ENCODE measurements at regions of chr9 and their contacts with region 1.

Region 1: DNA sequence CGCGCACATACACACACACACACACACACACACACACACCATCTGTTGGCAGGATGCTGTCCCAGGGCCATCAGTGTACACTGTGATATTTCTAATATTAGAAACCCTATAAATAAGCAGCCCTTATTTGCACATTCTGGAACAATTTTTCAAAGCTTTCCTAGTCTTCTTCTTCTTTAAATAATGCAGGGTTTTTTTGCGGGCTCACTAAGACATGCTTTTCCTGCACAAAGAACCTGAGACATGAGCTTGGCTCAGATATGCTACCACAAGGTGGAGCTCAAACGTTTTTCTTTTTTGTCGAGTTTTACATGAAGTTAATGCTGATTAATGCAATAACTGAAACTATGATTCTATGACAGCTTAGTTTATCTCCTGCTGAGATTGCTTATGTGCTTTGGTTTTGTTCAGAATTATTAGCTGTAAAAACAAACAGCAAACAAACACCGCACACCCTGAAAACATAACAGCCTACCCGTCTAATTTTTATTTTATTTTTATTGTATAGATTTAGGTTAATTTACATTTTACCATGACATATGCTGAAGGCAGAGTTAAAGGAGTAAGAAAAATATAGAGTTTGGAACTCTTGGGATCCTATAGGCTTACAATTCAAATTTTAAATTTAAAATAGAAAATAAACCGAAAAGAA is 95.8 kb downstream of the ALDH1A1 start:
- DNase-seq: peak; percentile 14 to 18
- H3K4me3 ChIP-seq: no peak overlapping the region
- H3K27ac ChIP-seq: peak overlapping the region in 2 of 3 donors; percentile 25 to 52
- H3K4me1 ChIP-seq: peaks cover 14 to 16% of the 10 kb centered on the region in 2 donors
- H3K27me3 ChIP-seq: no peaks in the 10 kb centered on the region
- CTCF ChIP-seq: peak; percentile 28 to 78 (median 68)
- POLR2A ChIP-seq: no peak

Region 2: DNA sequence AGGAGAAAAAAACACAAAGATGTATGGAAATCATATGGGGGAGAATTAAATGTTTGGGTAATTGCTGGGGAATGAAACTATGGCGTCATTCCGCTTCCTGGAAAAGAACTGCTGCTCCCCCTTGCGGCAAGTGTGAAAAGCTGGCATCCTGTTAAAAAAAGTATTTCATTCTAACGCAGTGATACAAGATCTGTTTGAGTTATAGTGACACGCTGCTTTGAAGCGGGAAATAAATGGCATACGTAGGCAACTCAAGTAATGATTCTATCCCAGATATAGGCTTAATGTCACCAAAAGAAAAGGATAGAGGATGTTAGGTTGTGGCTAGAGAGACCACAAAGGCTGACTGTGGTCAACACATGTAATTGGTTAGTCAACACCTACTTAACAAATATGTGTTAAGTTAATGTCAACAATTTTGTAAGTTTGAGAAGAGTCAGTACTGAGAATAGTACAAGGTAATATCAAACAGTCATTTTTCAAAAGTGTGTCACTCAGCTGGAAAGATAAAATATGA is 166.0 kb after region 1 on chr9:
- intact Hi-C with region 1: loop called (anchors 5 kb)
- DNase-seq: peak; percentile 35 to 65
- H3K4me3 ChIP-seq: no peak overlapping the region
- H3K27ac ChIP-seq: no peak overlapping the region
- H3K4me1 ChIP-seq: peaks cover 0 to 6% of the 10 kb centered on the region in 2 donors
- H3K27me3 ChIP-seq: no peaks in the 10 kb centered on the region
- CTCF ChIP-seq: peak; percentile 72 to 95 (median 80)
- POLR2A ChIP-seq: no peak

Region 3: DNA sequence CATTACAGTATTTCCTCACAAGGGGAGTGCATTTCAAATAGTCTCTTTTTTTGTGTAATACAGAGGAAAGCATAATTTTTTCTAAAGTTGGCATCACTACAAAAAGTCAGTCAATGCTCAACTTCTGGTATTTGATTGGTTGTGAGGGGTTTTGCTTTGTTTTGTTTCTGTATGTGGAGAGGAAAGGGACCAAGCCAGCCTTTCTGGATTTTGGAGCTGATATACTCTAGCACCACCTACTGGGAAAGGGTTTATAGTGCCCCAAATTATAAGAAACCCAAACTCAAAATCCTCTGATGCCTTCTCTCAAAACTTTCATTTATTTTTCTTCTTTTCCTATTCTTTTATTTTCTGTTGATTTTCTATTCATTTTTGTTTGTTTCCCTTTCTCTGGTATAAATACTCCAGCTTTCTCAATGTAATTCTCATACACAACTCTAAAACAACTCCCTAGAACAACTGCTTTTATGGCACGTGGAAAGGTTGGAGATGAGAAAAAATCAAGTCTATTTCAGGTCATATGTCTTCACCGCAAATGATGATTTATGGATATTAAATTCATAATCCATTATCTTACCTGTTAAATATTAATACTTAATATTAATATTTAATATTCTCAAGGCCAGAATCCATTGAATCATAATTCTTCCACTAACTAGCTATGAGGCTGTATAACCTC is 225.0 kb after region 1 on chr9:
- intact Hi-C with region 1: loop called (anchors 10 kb)
- DNase-seq: no peak
- H3K4me3 ChIP-seq: no peak overlapping the region
- H3K27ac ChIP-seq: no peak overlapping the region
- H3K4me1 ChIP-seq: peaks cover 0 to 3% of the 10 kb centered on the region in 2 donors
- H3K27me3 ChIP-seq: no peaks in the 10 kb centered on the region
- CTCF ChIP-seq: peak; percentile 56 to 86 (median 68)
- POLR2A ChIP-seq: no peak

Region 4: GRCh38 chr9:73183917-73184861 is 327.1 kb after region 1 on chr9:
- intact Hi-C with region 1: loop called (anchors 10 kb)
- DNase-seq: no peak
- H3K4me3 ChIP-seq: no peak overlapping the region
- H3K27ac ChIP-seq: no peak overlapping the region
- H3K4me1 ChIP-seq: no peaks in the 10 kb centered on the region
- H3K27me3 ChIP-seq: no peaks in the 10 kb centered on the region
- CTCF ChIP-seq: peak; percentile 26 to 74 (median 50)
- POLR2A ChIP-seq: no peak

Measured in thyroid gland (tissue), 4 donors.